ENCODE measurements at regions of chr19 and their contacts with region 1.

Region 1: DNA sequence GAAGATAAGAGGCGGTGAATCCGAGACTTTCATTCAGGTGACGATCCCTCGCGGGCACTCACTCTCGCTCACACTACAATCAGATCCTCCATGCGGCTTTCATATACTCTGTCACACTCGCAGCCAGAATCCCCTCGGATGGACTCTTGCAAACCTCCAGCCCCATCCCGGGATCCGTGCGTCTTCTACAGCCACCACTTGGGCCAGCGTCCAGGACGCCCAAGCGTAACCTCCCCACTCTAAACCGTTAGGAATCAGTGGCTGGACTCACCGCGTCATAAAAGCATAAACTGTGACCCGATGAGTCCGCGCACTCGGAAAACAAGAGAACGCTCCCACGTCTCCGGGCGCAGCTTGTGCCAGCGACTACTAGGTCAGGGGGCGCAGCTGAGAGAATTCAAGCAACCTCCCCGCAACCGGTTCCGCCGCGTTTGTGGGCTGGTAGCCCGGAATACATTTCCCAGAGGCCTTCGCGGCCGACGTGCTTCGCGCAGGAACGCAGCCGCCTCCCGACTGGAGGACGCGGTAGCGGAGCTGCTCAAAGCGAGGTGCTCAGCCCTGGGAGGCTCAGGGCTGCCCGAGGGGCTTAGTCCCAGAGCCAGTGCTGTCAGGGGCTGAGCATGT is 27.6 kb downstream of the ZNF607 start:
- DNase-seq: peak; percentile 89
- H3K4me3 Mint-ChIP-seq: peak overlapping the region; percentile 87
- H3K27ac Mint-ChIP-seq: peak overlapping the region; percentile 77
- H3K4me1 Mint-ChIP-seq: peaks cover 9% of the 10 kb centered on the region
- H3K27me3 Mint-ChIP-seq: no peaks in the 10 kb centered on the region

Region 2: DNA sequence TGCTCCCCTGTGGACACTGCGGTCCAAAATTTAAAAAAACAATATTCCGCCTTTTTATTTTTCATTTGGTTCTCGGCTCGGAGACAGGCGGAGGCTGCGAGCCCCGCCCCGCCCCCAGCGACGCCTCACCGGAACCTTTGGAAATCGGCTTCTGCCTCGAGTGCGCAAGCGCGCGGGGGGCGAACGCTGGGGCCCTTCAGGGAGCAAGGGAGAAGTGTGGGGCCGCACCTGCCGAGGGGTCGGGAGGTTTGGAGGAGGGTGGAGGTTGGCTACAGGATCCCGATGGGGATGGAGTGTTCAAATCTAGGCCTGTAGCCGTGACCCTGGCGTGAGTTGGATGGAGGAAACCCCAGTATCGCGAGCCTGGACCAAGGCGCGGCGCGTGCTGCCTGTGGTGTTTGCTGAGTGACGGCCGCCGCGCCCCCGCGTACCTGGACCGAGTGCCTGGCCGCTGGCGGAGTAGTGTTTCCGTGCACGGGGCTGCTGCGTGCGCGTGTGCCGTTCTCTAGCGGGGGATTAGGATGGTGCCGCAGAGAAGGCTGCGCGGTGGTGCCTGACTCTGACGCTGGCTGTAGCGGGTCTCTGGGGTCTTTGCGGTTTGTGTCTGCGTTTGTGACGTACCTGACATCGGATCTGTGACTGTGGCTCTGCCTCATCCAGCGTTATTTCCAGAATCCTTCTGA is 36.2 kb before region 1 on chr19:
- CTCF ChIA-PET with region 1: no interaction called
- POLR2A ChIA-PET with region 1: no interaction called
- intact Hi-C with region 1: loop called (anchors 2 kb)
- DNase-seq: peak; percentile 90
- H3K4me3 Mint-ChIP-seq: peak overlapping the region; percentile 91
- H3K27ac Mint-ChIP-seq: peak overlapping the region; percentile 95
- H3K4me1 Mint-ChIP-seq: peaks cover 27% of the 10 kb centered on the region
- H3K27me3 Mint-ChIP-seq: no peaks in the 10 kb centered on the region

Region 3: DNA sequence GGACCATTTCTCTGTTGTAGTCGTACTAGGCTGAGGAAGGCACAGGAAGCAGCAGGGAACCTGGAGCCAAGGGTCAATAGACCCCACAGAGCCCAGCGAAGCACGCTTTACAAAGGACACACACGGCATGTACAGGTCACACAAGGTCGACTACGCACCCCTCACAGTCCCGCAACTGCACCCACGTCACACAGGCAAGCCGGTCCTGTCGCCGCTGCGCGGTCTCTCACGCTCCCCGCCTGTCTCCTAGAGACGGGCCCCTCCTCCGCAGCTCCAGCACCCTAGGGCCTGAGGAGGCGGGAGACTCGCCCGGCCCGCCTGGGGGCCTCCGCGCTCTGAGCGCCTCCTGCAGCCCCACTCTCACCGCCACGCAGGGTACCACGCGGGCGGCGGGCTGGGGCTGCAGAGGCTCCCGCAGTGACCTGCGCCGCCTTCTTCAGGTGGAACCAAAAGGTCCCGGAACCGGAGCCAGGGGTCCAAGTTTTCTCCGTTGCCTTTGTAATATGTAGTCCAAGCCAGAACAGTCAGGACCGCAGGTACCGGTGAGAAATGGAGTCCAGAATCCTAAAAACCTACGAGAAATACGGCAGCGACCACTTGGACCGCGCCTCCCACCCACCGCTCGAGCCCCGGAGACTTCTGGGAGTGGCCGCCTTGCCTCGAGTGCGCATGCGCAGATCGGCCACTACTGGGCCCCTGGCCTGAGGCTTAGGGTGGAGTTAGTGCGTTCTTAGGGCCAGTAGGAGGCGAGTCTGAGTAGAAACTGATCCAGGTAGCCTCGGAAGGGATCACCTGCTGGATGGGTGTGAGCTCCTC is 27.3 kb after region 1 on chr19 and contains the start of gene ZNF607:
- CTCF ChIA-PET with region 1: no interaction called
- POLR2A ChIA-PET with region 1: no interaction called
- intact Hi-C with region 1: loop called (anchors 2 kb)
- DNase-seq: peak; percentile 92
- H3K4me3 Mint-ChIP-seq: peak within 1 kb of the TSS; percentile 89
- H3K27ac Mint-ChIP-seq: peak within 1 kb of the TSS; percentile 82
- H3K4me1 Mint-ChIP-seq: peaks cover 13% of the 10 kb centered on the region
- H3K27me3 Mint-ChIP-seq: no peaks in the 10 kb centered on the region
- total RNA-seq, gene ZNF607: 5.3 to 7.0 TPM

Region 4: DNA sequence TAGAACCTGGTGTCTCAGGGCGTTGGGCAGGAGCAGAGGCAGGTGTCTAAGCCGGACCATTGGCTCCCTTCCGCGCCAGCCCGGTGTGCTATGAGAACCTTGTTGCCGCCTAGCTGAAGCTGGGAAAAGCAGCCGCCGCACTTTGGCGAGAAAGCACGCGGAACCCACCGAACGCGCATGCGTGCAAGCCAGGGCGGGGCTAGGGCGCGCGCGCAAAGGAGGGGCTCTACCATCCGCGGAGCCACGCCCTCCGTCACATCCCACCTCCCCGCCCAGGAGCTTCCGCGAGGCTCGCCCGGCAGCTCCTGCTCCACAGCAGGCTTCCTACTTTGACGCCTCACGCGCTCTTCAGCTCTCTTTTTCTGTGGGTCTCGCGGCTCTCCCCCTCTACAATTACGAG is 163.1 kb after region 1 on chr19:
- CTCF ChIA-PET with region 1: no interaction called
- POLR2A ChIA-PET with region 1: no interaction called
- intact Hi-C with region 1: no loop called
- DNase-seq: peak; percentile 17
- H3K4me3 Mint-ChIP-seq: no peak overlapping the region
- H3K27ac Mint-ChIP-seq: no peak overlapping the region
- H3K4me1 Mint-ChIP-seq: no peaks in the 10 kb centered on the region
- H3K27me3 Mint-ChIP-seq: peaks cover 6% of the 10 kb centered on the region

Measured in activated CD4-positive, alpha-beta memory T cell treated with anti-CD3 and anti-CD28 coated beads for 36 hours (primary cell).